IMR-90 (cell line): ENCODE measurements at regions of chr6 and their contacts with region 1.

Region 1: DNA sequence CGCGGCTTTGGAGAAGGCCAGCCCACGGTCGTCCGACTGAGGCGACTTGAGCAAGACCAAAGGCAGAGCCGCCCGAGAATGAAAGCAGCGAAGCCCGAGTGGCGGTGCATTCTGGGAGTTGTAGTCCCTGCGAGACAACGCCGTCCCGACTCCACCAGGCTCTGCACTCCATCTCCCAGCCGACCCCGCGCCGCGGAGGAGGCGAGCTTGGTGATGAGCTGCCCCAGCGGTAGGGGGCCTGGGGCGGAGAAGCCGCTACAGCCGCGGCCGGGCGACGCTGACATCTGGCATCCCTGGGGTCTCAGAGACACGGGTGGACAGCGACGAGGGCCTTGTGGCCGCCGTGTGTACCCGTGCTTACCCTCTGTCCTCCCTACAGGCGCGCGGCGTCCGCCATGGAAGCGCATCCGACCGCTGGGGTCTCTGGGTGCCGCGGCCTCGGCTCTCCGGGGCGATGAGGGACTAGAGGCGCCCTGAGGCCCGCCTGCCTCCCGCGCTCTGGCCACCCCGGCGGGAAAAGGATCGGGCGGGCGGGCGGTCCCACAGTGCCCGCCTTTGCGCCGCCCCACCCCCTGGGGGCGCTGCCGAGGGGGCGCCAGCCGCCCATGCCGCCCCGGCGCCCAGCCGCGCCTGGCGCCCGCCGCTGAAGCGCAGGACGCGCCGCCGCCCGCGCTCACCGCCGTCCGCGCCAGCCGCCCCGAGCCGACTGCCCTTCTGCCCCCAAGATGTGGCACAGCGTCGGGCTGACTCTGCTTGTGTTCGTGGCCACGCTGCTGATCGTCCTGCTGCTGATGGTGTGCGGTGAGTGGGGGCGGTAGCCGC is at the start of gene SMIM13:
- DNase-seq: peak; percentile 98
- ATAC-seq: peak; percentile 96
- H3K4me3 ChIP-seq: peak within 1 kb of the TSS; percentile 70
- H3K27ac ChIP-seq: peak within 1 kb of the TSS; percentile 96
- H3K4me1 ChIP-seq: peaks cover 3% of the 10 kb centered on the region; the same call in 1 of the 2 replicates
- H3K27me3 ChIP-seq: no peaks in the 10 kb centered on the region
- CTCF ChIP-seq: peak; percentile 61
- POLR2A ChIP-seq: peak; percentile 82
- RAD21 ChIP-seq: peak; percentile 31; the same call in 1 of the 2 replicates
- total RNA-seq, gene SMIM13: 10.0 and 17.2 TPM in 2 replicates

Region 2: DNA sequence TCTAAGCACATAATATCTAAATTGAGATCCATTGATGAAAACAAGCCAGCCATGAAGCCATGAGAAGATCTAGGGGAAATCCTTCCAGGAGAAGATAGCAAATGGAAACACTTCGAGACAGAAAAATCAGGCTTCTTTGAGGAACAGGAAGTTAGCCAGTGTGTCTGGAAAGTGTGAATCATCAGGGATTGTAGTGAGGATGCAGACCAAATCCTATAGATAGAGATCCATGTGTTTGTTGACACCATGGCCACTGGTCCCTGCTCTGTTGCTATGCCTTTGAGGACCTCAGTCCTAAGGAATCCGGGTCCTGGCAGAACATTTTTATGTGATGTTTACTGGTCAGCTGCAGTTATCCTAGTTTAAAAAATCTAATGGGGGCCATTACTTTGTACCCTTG is 43.1 kb before region 1 on chr6:
- CTCF ChIA-PET with region 1: no interaction called
- POLR2A ChIA-PET with region 1: no interaction called
- dilution Hi-C with region 1: no loop called
- in situ Hi-C with region 1: no loop called
- intact Hi-C with region 1: no loop called
- DNase-seq: peak; percentile 72
- ATAC-seq: 0 out of 2 replicates have a peak, but pooled peaks have one; percentile 14
- H3K4me3 ChIP-seq: no peak overlapping the region
- H3K27ac ChIP-seq: no peak overlapping the region
- H3K4me1 ChIP-seq: peaks cover 5% of the 10 kb centered on the region
- H3K27me3 ChIP-seq: no peaks in the 10 kb centered on the region
- CTCF ChIP-seq: no peak
- POLR2A ChIP-seq: no peak
- RAD21 ChIP-seq: no peak

Region 3: DNA sequence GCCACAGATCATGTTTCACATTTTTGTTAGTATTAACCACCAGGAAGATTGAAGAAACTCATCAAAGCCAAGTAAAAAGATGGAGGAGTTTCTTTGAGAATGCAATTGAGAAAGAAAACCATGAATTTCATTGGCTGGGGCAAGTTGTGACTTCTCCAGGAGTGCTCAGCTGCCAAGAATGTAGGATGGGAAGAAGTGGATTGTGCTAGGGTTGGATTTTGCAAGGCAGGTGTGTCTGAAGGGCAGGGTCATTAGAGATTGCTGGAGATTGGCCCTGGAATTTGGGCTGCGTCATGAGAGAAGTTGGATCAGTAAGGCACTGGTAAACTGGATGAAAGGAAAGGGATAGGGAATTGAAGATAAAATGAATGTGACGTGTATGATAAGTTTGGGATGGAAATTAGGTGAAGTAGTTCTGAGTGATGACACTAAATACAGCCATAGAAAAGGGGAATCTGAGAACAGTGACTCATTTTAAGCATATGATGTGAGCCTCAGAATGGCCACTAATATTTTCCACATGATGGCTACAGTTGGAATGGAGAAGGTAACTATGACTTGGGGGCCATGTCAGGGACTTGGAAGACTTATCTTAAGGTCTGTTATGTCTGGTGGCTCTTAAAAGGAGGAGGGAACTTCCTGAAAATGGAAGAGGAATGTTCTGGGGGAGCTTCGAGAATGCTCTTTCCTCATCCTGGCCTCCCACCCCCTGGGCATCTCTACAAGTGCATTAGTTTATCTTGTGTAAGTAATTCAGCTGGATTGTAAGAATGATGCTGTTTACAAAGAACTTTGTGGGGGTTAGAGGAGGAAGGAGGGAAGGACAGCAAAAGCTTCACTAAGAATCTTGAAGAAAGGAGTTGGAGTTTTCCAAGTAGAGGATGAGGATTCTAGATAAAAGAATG is 45.5 kb after region 1 on chr6:
- CTCF ChIA-PET with region 1: interaction called, 3 read pairs
- POLR2A ChIA-PET with region 1: no interaction called
- dilution Hi-C with region 1: no loop called
- in situ Hi-C with region 1: no loop called
- intact Hi-C with region 1: loop called (anchors 5 kb)
- DNase-seq: peak; percentile 72
- ATAC-seq: peak; percentile 45
- H3K4me3 ChIP-seq: no peak overlapping the region
- H3K27ac ChIP-seq: peak overlapping the region; percentile 87; the same call in 1 of the 2 replicates
- H3K4me1 ChIP-seq: peaks cover 10% of the 10 kb centered on the region
- H3K27me3 ChIP-seq: no peaks in the 10 kb centered on the region
- CTCF ChIP-seq: no peak
- POLR2A ChIP-seq: no peak
- RAD21 ChIP-seq: no peak